Activated naive CD4-positive, alpha-beta T cell treated with anti-CD3 and anti-CD28 coated beads for 36 hours (primary cell): ENCODE measurements at regions of chr12 and their contacts with region 1.

Region 1: GRCh38 chr12:64403707-64404469 is at the start of gene XPOT:
- DNase-seq: peak; percentile 94
- H3K4me3 Mint-ChIP-seq: peak within 1 kb of the TSS; percentile 95
- H3K27ac Mint-ChIP-seq: peak within 1 kb of the TSS; percentile 97
- H3K4me1 Mint-ChIP-seq: peaks cover 28% of the 10 kb centered on the region
- H3K27me3 Mint-ChIP-seq: no peaks in the 10 kb centered on the region
- total RNA-seq, gene XPOT: 227 to 236 TPM

Region 2: DNA sequence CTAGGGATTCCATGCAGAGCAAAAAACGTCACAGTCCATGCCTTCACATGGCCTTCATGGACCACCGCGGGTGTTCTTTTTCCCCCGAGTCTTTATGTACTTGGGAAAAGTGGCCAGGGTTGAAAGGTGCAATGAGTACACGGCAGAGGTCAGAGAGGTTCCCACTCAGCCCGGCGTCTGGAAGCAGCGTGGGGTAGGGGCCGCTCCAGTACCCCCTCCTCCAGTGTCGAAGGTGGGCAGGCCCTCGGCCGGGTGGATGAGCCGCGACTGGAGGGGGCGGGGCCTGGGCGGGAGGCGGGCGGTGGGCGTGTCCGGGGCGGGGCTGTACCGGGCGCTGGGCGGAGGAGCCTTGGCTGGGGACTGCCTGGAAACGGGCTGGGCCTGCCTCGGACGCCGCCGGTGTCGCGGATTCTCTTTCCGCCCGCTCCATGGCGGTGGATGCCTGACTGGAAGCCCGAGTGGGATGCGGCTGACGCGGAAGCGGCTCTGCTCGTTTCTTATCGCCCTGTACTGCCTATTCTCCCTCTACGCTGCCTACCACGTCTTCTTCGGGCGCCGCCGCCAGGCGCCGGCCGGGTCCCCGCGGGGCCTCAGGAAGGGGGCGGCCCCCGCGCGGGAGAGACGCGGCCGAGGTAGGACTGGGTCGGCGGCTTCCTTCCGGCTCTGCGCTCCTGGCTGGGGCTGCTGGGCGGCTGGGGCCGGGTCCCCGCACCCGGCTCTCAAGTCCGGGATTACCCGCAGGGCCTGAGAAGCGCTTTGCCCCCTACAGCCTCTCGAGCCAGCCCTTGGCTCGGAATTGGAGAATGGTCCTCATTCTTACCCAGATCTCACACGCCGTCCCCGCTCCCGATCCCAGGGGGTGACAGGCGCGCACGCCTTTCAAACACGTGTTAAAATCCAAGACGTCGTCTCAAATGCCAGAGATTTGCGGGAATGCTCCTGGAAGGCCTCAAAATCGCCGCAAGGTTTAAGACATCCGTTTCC is 624.1 kb before region 1 on chr12 and contains the start of gene RXYLT1:
- CTCF ChIA-PET with region 1: no interaction called
- intact Hi-C with region 1: loop called (anchors 1 kb)
- DNase-seq: peak; percentile 85
- H3K4me3 Mint-ChIP-seq: peak within 1 kb of the TSS; percentile 98
- H3K27ac Mint-ChIP-seq: peak within 1 kb of the TSS; percentile 91
- H3K4me1 Mint-ChIP-seq: peaks cover 18% of the 10 kb centered on the region
- H3K27me3 Mint-ChIP-seq: no peaks in the 10 kb centered on the region
- total RNA-seq, gene RXYLT1: 9.8 to 12.7 TPM

Region 3: GRCh38 chr12:64385468-64385867 is 18.4 kb before region 1 on chr12:
- CTCF ChIA-PET with region 1: interaction called, 6 read pairs
- intact Hi-C with region 1: loop called (anchors 1 kb)
- DNase-seq: peak; percentile 67
- H3K4me3 Mint-ChIP-seq: peak overlapping the region; percentile 11
- H3K27ac Mint-ChIP-seq: peak overlapping the region; percentile 10
- H3K4me1 Mint-ChIP-seq: peaks cover 24% of the 10 kb centered on the region
- H3K27me3 Mint-ChIP-seq: no peaks in the 10 kb centered on the region

Region 4: GRCh38 chr12:64431791-64432190 is 27.9 kb after region 1 on chr12:
- CTCF ChIA-PET with region 1: no interaction called
- intact Hi-C with region 1: no loop called
- DNase-seq: no peak
- H3K4me3 Mint-ChIP-seq: no peak overlapping the region
- H3K27ac Mint-ChIP-seq: no peak overlapping the region
- H3K4me1 Mint-ChIP-seq: peaks cover 2% of the 10 kb centered on the region
- H3K27me3 Mint-ChIP-seq: no peaks in the 10 kb centered on the region

Region 5: GRCh38 chr12:64451687-64452558 is 48.0 kb after region 1 on chr12 and contains the start of gene TBK1:
- CTCF ChIA-PET with region 1: no interaction called
- intact Hi-C with region 1: loop called (anchors 1 kb)
- DNase-seq: peak; percentile 45
- H3K4me3 Mint-ChIP-seq: peak within 1 kb of the TSS; percentile 94
- H3K27ac Mint-ChIP-seq: peak within 1 kb of the TSS; percentile 94
- H3K4me1 Mint-ChIP-seq: peaks cover 41% of the 10 kb centered on the region
- H3K27me3 Mint-ChIP-seq: no peaks in the 10 kb centered on the region
- total RNA-seq, gene TBK1: 10.7 to 12.1 TPM

Region 6: GRCh38 chr12:64610149-64610678 is 206.3 kb after region 1 on chr12 and contains the start of gene RASSF3:
- CTCF ChIA-PET with region 1: no interaction called
- intact Hi-C with region 1: loop called (anchors 1 kb)
- DNase-seq: peak; percentile 83
- H3K4me3 Mint-ChIP-seq: peak within 1 kb of the TSS; percentile 95
- H3K27ac Mint-ChIP-seq: peak within 1 kb of the TSS; percentile 96
- H3K4me1 Mint-ChIP-seq: peaks cover 43% of the 10 kb centered on the region
- H3K27me3 Mint-ChIP-seq: no peaks in the 10 kb centered on the region
- total RNA-seq, gene RASSF3: 39.4 to 43.8 TPM

Region 7: DNA sequence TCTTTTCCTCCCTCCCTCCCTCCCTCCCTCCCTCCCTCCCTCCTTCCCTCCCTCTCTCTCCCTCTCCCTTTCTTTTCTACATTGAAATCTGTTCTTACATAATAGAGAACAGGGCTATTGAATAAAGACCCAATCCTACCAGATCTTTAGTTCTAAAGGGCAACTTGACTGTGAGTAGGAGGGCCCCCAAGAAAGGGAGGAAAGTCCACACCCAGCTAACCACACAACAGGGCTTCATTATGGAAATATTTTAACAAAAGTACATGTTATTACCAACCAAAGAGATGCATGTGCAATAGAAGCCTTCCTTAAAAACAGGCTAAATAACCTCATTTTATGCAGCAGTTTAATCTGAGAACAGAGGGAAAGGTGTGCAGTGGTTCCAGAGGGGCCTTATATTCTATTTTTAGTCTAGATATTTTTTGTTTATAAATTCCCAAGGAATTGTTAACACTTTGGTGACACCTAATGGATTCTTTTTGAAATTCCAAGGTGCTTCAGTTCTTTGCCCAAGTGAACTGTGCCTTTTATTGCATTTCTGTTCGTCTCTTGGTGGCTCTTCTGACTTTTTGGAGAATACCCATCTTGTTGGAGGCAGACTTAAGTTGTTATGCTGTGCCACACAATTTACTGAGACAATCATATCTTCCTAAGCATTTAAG is 292.3 kb after region 1 on chr12:
- CTCF ChIA-PET with region 1: no interaction called
- intact Hi-C with region 1: loop called (anchors 2 kb)
- DNase-seq: no peak
- H3K4me3 Mint-ChIP-seq: no peak overlapping the region
- H3K27ac Mint-ChIP-seq: peak overlapping the region; percentile 40
- H3K4me1 Mint-ChIP-seq: peaks cover 75% of the 10 kb centered on the region
- H3K27me3 Mint-ChIP-seq: no peaks in the 10 kb centered on the region